CD8-positive, alpha-beta T cell (primary cell): ENCODE measurements at regions of chr14 and their contacts with region 1.

Region 1: GRCh38 chr14:24114536-24115450 is at the starts of genes DCAF11 and NRL:
- DNase-seq: peak; percentile 95 to 100 (median 98)
- ATAC-seq: peak; percentile 82
- H3K4me3 ChIP-seq: peak within 1 kb of the TSS; percentile 72 to 87
- H3K4me3 Mint-ChIP-seq: peak within 1 kb of the TSS; percentile 98
- H3K27ac ChIP-seq: peak within 1 kb of the TSS; percentile 97 to 99
- H3K27ac Mint-ChIP-seq: peak within 1 kb of the TSS; percentile 100
- H3K4me1 ChIP-seq: peaks cover 19% of the 10 kb centered on the region
- H3K4me1 Mint-ChIP-seq: peaks cover 31% of the 10 kb centered on the region
- H3K27me3 ChIP-seq: no peaks in the 10 kb centered on the region
- H3K27me3 Mint-ChIP-seq: no peaks in the 10 kb centered on the region
- CTCF ChIP-seq: no peak
- total RNA-seq, gene DCAF11: 88.7 to 89.7 TPM
- total RNA-seq, gene NRL: 3.4 to 3.8 TPM

Region 2: GRCh38 chr14:23910101-23910875 is 204.5 kb before region 1 on chr14:
- CTCF ChIA-PET with region 1: no interaction called
- POLR2A ChIA-PET with region 1: no interaction called
- intact Hi-C with region 1: no loop called
- DNase-seq: peak in 2 of 9 experiments; percentile 25 to 34
- ATAC-seq: no peak
- H3K4me3 ChIP-seq: no peak overlapping the region
- H3K4me3 Mint-ChIP-seq: no peak overlapping the region
- H3K27ac ChIP-seq: no peak overlapping the region
- H3K27ac Mint-ChIP-seq: no peak overlapping the region
- H3K4me1 ChIP-seq: no peaks in the 10 kb centered on the region
- H3K4me1 Mint-ChIP-seq: no peaks in the 10 kb centered on the region
- H3K27me3 ChIP-seq: peaks cover 0 to 4% of the 10 kb centered on the region in 2 experiments
- H3K27me3 Mint-ChIP-seq: peaks cover 21% of the 10 kb centered on the region
- CTCF ChIP-seq: peak; percentile 45

Region 3: DNA sequence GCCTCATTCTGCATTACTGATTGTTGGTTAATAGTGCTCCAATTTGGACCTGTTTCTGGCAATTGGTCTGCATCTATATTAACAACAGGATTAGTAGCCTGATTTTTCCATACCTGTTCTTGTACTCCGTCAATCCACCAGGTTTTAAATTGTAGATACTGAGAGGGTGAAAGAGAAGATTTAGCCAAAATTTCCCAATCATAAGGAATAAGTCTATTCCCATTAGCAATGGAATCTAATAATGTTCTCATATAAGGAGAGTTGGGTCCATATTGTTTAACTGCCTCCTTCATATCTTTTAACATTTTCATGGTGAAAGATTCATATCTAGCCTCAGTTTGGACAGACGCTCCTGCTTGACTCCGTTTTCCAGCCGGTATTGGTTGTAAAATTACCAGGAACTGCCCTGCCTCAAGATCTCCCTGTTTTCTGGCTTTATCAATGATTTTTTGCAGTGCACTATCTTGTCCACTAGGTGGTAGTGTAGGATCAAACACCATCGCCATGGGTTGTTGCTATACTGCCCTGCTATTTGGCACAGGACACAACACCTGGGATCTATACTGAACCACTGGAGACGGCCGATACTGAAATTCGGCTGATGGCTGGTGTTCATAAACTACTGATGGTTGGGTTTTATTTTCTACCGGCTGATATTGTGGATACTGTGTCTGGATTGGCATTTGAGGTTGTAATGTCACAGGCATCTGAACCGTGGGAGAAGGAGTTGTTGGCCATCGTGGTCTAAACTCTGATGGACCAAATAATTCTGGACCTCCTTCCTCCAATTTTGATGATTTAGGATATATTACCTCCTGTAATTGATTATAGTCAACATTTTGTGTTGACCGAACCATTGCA is 100.9 kb before region 1 on chr14:
- CTCF ChIA-PET with region 1: no interaction called
- POLR2A ChIA-PET with region 1: interaction called, 3 read pairs
- intact Hi-C with region 1: loop called in 1 of 2 experiments (anchors 1 kb)
- DNase-seq: peak in 8 of 9 experiments; percentile 14 to 84 (median 50)
- ATAC-seq: peak; percentile 99
- H3K4me3 ChIP-seq: no peak overlapping the region
- H3K4me3 Mint-ChIP-seq: no peak overlapping the region
- H3K27ac ChIP-seq: no peak overlapping the region
- H3K27ac Mint-ChIP-seq: no peak overlapping the region
- H3K4me1 ChIP-seq: peaks cover 7% of the 10 kb centered on the region
- H3K4me1 Mint-ChIP-seq: peaks cover 25% of the 10 kb centered on the region
- H3K27me3 ChIP-seq: no peaks in the 10 kb centered on the region
- H3K27me3 Mint-ChIP-seq: no peaks in the 10 kb centered on the region
- CTCF ChIP-seq: peak; percentile 93

Region 4: GRCh38 chr14:24032721-24033418 is 81.9 kb before region 1 on chr14:
- CTCF ChIA-PET with region 1: no interaction called
- POLR2A ChIA-PET with region 1: no interaction called
- intact Hi-C with region 1: no loop called
- DNase-seq: no peak
- ATAC-seq: no peak
- H3K4me3 ChIP-seq: no peak overlapping the region
- H3K4me3 Mint-ChIP-seq: no peak overlapping the region
- H3K27ac ChIP-seq: no peak overlapping the region
- H3K27ac Mint-ChIP-seq: no peak overlapping the region
- H3K4me1 ChIP-seq: no peaks in the 10 kb centered on the region
- H3K4me1 Mint-ChIP-seq: peaks cover 9% of the 10 kb centered on the region
- H3K27me3 ChIP-seq: no peaks in the 10 kb centered on the region
- H3K27me3 Mint-ChIP-seq: no peaks in the 10 kb centered on the region
- CTCF ChIP-seq: no peak

Region 5: DNA sequence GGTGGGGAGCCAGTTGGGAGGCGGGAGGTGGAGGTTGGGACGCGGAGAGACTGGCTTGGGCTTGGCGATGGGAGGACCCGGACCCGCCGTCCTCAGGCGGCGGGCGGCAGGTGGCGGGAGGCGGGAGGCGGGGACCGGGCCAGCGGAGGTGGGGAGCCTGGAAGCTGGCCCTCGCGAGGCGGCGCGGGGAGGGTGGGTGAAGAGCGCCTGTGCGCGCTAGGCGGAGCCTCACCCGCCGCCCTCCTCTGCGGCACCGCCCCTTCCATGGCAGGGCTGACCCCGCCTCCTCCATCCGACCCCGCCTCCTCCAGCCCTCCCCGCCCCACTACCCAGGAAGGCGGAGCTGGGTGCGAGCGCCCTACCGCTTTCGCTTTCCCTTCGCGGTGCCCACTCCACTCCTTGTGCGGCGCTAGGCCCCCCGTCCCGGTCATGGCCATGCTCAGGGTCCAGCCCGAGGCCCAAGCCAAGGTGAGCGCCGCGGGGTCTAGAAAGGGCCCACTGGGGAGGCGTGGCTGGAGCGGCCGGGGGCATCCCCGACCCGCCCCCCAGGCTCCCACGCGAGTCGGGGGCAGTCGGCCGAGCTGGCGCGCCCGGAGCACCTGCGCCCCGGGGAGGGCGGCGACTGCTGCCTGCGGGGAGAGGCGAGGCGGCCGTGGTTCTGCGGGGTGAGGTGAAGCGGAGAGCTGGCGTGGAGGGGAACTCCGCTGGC is 21.2 kb after region 1 on chr14 and contains the start of gene PSME1:
- CTCF ChIA-PET with region 1: interaction called, 29 read pairs
- POLR2A ChIA-PET with region 1: interaction called, 56 read pairs
- intact Hi-C with region 1: loop called (anchors 1 kb)
- DNase-seq: peak; percentile 89 to 97 (median 94)
- ATAC-seq: peak; percentile 98
- H3K4me3 ChIP-seq: peak within 1 kb of the TSS; percentile 78 to 91
- H3K4me3 Mint-ChIP-seq: peak within 1 kb of the TSS; percentile 90
- H3K27ac ChIP-seq: peak within 1 kb of the TSS; percentile 81 to 83
- H3K27ac Mint-ChIP-seq: peak within 1 kb of the TSS; percentile 93
- H3K4me1 ChIP-seq: peaks cover 54% of the 10 kb centered on the region
- H3K4me1 Mint-ChIP-seq: peaks cover 65% of the 10 kb centered on the region
- H3K27me3 ChIP-seq: no peaks in the 10 kb centered on the region
- H3K27me3 Mint-ChIP-seq: no peaks in the 10 kb centered on the region
- CTCF ChIP-seq: no peak
- total RNA-seq, gene PSME1: 200 to 207 TPM

Region 6: GRCh38 chr14:24188251-24189058 is 73.7 kb after region 1 on chr14 and contains the start of gene IPO4:
- CTCF ChIA-PET with region 1: no interaction called
- POLR2A ChIA-PET with region 1: interaction called, 17 read pairs
- intact Hi-C with region 1: loop called in 1 of 2 experiments (anchors 1 kb)
- DNase-seq: peak; percentile 86 to 99 (median 94)
- ATAC-seq: peak; percentile 91
- H3K4me3 ChIP-seq: peak within 1 kb of the TSS; percentile 77 to 82
- H3K4me3 Mint-ChIP-seq: peak within 1 kb of the TSS; percentile 89
- H3K27ac ChIP-seq: peak within 1 kb of the TSS; percentile 61 to 89
- H3K27ac Mint-ChIP-seq: peak within 1 kb of the TSS; percentile 87
- H3K4me1 ChIP-seq: peaks cover 17% of the 10 kb centered on the region
- H3K4me1 Mint-ChIP-seq: peaks cover 38% of the 10 kb centered on the region
- H3K27me3 ChIP-seq: no peaks in the 10 kb centered on the region
- H3K27me3 Mint-ChIP-seq: no peaks in the 10 kb centered on the region
- CTCF ChIP-seq: no peak
- total RNA-seq, gene IPO4: 69.2 to 75.6 TPM

Region 7: DNA sequence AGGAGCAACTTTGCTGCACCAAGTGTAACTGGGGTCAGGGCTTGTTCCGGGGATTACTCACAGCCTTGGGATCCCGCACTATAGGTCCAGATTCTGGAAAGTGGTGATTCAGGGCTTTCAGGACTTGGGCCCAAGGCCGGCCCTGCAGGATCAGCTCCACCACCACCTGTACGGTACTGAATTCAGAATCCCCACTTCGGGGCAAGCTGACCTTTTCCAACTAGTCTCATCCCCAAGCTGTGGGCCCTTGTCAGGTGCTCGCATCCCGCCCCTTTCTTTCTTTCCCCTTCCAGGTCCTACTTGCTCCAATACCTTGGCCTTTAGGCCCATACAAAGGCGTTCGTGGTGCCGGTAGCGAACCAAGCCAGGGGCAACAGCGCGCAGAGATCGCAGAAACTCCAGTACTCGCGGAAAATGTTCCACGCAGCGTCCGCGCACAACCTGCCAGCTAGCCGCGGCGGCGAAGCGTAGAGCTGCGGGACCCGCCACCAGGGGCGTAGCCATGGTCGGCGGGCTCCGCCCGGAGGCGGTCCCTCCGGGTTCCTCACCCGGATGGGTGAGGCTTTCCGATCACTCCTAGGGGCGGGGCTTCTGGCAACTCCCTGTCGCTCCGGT is 127.1 kb after region 1 on chr14:
- CTCF ChIA-PET with region 1: interaction called, 4 read pairs
- POLR2A ChIA-PET with region 1: interaction called, 19 read pairs
- intact Hi-C with region 1: loop called in 1 of 2 experiments (anchors 1 kb)
- DNase-seq: peak; percentile 84 to 97 (median 94)
- ATAC-seq: peak; percentile 83
- H3K4me3 ChIP-seq: peak overlapping the region; percentile 75 to 83
- H3K4me3 Mint-ChIP-seq: peak overlapping the region; percentile 99
- H3K27ac ChIP-seq: peak overlapping the region; percentile 98
- H3K27ac Mint-ChIP-seq: peak overlapping the region; percentile 100
- H3K4me1 ChIP-seq: peaks cover 41% of the 10 kb centered on the region
- H3K4me1 Mint-ChIP-seq: peaks cover 58% of the 10 kb centered on the region
- H3K27me3 ChIP-seq: no peaks in the 10 kb centered on the region
- H3K27me3 Mint-ChIP-seq: no peaks in the 10 kb centered on the region
- CTCF ChIP-seq: peak; percentile 48

Region 8: GRCh38 chr14:24277071-24277470 is 162.3 kb after region 1 on chr14:
- CTCF ChIA-PET with region 1: no interaction called
- POLR2A ChIA-PET with region 1: no interaction called
- intact Hi-C with region 1: no loop called
- DNase-seq: no peak
- ATAC-seq: no peak
- H3K4me3 ChIP-seq: no peak overlapping the region
- H3K4me3 Mint-ChIP-seq: no peak overlapping the region
- H3K27ac ChIP-seq: no peak overlapping the region
- H3K27ac Mint-ChIP-seq: peak overlapping the region; percentile 71
- H3K4me1 ChIP-seq: peaks cover 37% of the 10 kb centered on the region
- H3K4me1 Mint-ChIP-seq: peaks cover 43% of the 10 kb centered on the region
- H3K27me3 ChIP-seq: no peaks in the 10 kb centered on the region
- H3K27me3 Mint-ChIP-seq: no peaks in the 10 kb centered on the region
- CTCF ChIP-seq: no peak